SK-N-SH (cell line): ENCODE measurements at regions of chr5 and their contacts with region 1.

Region 1: DNA sequence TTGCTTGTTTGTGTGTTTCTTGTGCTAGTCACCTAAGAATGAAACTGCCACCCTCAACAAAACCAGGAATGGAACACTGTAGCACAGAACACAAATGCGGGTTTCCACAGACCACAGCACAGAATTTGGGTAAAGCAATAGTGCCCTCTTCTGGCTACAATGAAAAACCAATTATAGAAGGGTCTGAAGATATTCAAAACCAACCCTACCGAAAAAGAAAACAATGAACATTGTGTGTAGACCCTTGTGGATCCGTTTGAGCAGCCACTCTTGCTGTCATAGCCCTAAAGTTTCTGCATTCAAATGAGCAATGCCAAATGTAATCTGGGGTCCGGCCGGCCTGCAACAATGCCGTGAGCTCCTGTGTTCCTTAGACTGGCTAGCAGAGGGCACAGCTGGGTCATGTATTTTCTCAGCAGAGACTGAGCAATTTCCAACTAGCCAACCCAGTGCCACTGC is 8.3 kb upstream of the ENC1 start:
- DNase-seq: peak; percentile 69
- H3K4me3 ChIP-seq: no peak overlapping the region; a peak in 1 of 4 replicates
- H3K27ac ChIP-seq: no peak overlapping the region
- H3K4me1 ChIP-seq: peaks cover 7 to 11% of the 10 kb centered on the region in 2 experiments; a peak in 2 of 4 replicates
- H3K27me3 ChIP-seq: no peaks in the 10 kb centered on the region
- CTCF ChIP-seq: peak; percentile 80
- EP300 ChIP-seq: 0 out of 4 replicates have a peak, but pooled peaks of 1 of the 2 experiments have one; percentile 11
- RAD21 ChIP-seq: peak; percentile 95

Region 2: GRCh38 chr5:73908395-73908794 is 740.5 kb before region 1 on chr5:
- CTCF ChIA-PET with region 1: interaction called, 124 read pairs
- POLR2A ChIA-PET with region 1: no interaction called
- DNase-seq: peak; percentile 39
- H3K4me3 ChIP-seq: no peak overlapping the region
- H3K27ac ChIP-seq: peak overlapping the region in 1 of 2 experiments; percentile 9; a peak in 1 of 4 replicates
- H3K4me1 ChIP-seq: peaks cover 0 to 6% of the 10 kb centered on the region in 2 experiments; a peak in 3 of 4 replicates
- H3K27me3 ChIP-seq: no peaks in the 10 kb centered on the region
- CTCF ChIP-seq: no peak
- EP300 ChIP-seq: peak in 1 of 2 experiments; percentile 58; a peak in 2 of 4 replicates
- RAD21 ChIP-seq: no peak

Region 3: GRCh38 chr5:74660140-74660539 is 11.3 kb after region 1 on chr5:
- CTCF ChIA-PET with region 1: interaction called, 12 read pairs
- POLR2A ChIA-PET with region 1: no interaction called
- DNase-seq: no peak
- H3K4me3 ChIP-seq: no peak overlapping the region
- H3K27ac ChIP-seq: peak overlapping the region in 1 of 2 experiments; percentile 33; a peak in 1 of 4 replicates
- H3K4me1 ChIP-seq: no peaks in the 10 kb centered on the region
- H3K27me3 ChIP-seq: no peaks in the 10 kb centered on the region
- CTCF ChIP-seq: no peak
- EP300 ChIP-seq: no peak
- RAD21 ChIP-seq: no peak